Mucosa of descending colon (tissue), 3 donors: ENCODE measurements at regions of chr2 and their contacts with region 1.

Region 1: DNA sequence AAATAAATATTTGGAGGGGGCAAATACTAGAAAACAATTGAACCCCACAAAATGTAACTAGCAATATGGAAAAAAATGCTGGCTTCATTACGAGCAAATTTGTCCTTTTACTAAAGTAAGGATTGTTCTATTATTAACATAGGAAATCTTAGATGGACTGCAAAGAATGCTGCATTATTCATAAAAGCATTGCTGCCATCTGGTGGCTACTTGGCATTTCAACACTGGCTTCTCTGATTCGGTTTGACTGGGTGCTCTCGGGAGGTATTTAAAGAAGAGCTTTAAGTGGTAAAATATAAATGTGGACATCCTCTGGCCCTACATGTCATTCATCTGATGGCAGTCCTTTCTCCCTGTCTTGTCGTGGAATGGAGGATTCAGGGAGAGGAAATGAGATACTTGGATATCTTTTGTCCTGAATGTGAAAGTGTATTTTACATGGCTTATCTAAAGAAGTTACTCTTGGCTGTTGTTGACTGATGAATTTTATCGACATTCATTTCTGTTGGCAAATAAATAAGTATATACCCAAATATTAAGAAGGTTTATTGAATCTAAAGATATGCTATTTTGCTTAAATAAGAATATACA is 130.2 kb downstream of the ARHGAP15 start:
- DNase-seq: peak in 2 of 3 donors; percentile 39 to 87
- ATAC-seq: peak; percentile 62
- H3K4me3 ChIP-seq: no peak overlapping the region
- H3K4me1 ChIP-seq: no peaks in the 10 kb centered on the region
- CTCF ChIP-seq: peak; percentile 56

Region 2: GRCh38 chr2:143034292-143035074 is 225.0 kb before region 1 on chr2:
- intact Hi-C with region 1: loop called in 1 of 2 experiments (anchors 10 kb)
- DNase-seq: peak in 1 of 3 donors; percentile 59
- ATAC-seq: peak; percentile 100
- H3K4me3 ChIP-seq: no peak overlapping the region
- H3K4me1 ChIP-seq: no peaks in the 10 kb centered on the region
- CTCF ChIP-seq: peak; percentile 95

Region 3: GRCh38 chr2:143110758-143111428 is 148.6 kb before region 1 on chr2:
- intact Hi-C with region 1: loop called (anchors 5 to 10 kb)
- DNase-seq: peak in 2 of 3 donors; percentile 29 to 71
- ATAC-seq: peak; percentile 76
- H3K4me3 ChIP-seq: no peak overlapping the region
- H3K4me1 ChIP-seq: no peaks in the 10 kb centered on the region
- CTCF ChIP-seq: no peak

Region 4: GRCh38 chr2:143205106-143205764 is 54.2 kb before region 1 on chr2:
- intact Hi-C with region 1: loop called in 1 of 2 experiments (anchors 1 kb)
- DNase-seq: no peak
- ATAC-seq: peak; percentile 54
- H3K4me3 ChIP-seq: no peak overlapping the region
- H3K4me1 ChIP-seq: no peaks in the 10 kb centered on the region
- CTCF ChIP-seq: no peak

Region 5: DNA sequence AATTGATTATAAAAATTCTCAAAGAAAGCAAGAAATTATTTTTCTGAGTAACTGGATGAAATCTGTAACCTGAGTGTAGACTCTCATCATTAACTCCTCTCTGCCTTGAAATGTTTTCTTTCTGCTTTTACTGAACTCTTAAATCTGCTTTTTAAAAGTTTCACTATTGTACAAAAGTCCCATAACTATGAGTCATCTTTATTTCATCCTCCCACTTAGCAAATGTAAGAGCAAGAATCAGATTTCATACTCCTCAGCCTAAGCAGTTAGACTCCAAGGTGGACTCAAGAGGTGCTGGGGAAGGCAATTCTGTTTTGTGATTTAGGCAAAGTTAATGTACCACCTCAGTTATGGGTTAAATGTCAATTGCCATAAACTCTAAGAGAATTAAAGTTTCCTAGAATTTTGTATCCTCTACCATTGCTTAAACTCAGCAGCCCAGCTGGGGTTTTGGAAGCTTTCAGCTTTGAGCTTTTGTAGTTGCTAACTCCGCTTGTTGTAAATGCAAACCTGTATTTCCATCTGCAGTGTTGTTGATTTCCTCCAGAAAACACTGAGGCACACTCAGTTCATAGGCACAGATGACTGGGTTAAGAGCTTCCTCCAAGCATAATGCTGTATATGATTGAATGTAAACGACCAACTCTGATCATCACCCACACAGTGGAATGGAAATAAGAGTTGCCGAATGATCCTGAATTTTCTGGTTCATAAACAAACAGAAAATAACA is 138.6 kb after region 1 on chr2:
- intact Hi-C with region 1: no loop called
- DNase-seq: no peak
- ATAC-seq: no peak
- H3K4me3 ChIP-seq: no peak overlapping the region
- H3K4me1 ChIP-seq: no peaks in the 10 kb centered on the region
- CTCF ChIP-seq: no peak